AG04450 (cell line): ENCODE measurements at regions of chr16 and their contacts with region 1.

Region 1: GRCh38 chr16:67910158-67910557 is 17.1 kb downstream of the PSKH1 start:
- DNase-seq: peak; percentile 42
- H3K4me3 ChIP-seq: no peak overlapping the region
- H3K27ac ChIP-seq: no peak overlapping the region
- H3K27me3 ChIP-seq: no peaks in the 10 kb centered on the region
- CTCF ChIP-seq: no peak

Region 2: GRCh38 chr16:67723151-67723982 is 186.8 kb before region 1 on chr16:
- CTCF ChIA-PET with region 1: no interaction called
- POLR2A ChIA-PET with region 1: no interaction called
- DNase-seq: peak; percentile 18
- H3K4me3 ChIP-seq: no peak overlapping the region
- H3K27ac ChIP-seq: peak overlapping the region; percentile 21
- H3K27me3 ChIP-seq: no peaks in the 10 kb centered on the region
- CTCF ChIP-seq: no peak

Region 3: DNA sequence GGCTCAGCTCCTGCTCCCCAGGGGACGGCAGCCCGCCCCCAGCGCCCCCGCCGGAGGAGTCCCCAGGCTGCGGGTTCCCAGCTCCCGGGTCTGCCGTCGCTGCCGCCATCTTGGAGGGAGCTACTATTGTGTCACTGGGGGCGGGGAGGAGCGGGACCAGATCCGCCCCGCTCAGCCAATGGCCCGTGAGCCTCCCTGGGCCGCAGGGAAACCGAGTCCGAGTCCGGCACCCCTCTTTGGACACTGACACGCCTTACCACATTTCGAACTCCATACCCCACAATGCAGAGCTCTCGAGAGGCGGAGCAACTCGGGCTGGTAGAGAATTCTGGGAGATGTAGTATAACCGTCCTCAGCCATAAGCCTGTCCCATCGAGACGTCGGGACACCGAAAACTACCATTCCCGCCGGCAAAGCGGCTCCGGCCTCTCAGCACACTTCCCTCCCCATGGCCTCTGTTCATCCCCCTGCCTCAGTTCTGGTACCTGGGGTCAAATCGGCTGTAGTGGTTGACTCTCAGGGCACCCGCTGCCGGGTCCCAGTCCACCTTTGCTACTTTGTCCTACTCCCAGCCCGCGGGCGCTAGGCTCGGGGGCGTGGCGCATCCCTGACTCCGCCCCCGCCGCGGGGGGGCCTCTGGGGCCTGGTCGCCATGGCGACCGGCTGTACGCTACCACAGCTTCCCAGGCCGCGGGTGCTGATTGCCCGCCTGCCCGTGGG is 103.6 kb before region 1 on chr16 and contains the starts of genes RANBP10 and TSNAXIP1:
- CTCF ChIA-PET with region 1: no interaction called
- POLR2A ChIA-PET with region 1: no interaction called
- DNase-seq: peak; percentile 97
- H3K4me3 ChIP-seq: peak within 1 kb of the TSS; percentile 95
- H3K27ac ChIP-seq: no peak within 1 kb of the TSS
- H3K27me3 ChIP-seq: no peaks in the 10 kb centered on the region
- CTCF ChIP-seq: no peak
- polyA plus RNA-seq, gene RANBP10: 11.3 and 11.7 TPM in 2 replicates
- polyA plus RNA-seq, gene TSNAXIP1: 0.92 and 1.1 TPM in 2 replicates

Region 4: GRCh38 chr16:67936880-67937605 is 26.9 kb after region 1 on chr16:
- CTCF ChIA-PET with region 1: interaction called, 3 read pairs
- POLR2A ChIA-PET with region 1: interaction called, 10 read pairs
- DNase-seq: no peak
- H3K4me3 ChIP-seq: peak overlapping the region; percentile 97
- H3K27ac ChIP-seq: peak overlapping the region; percentile 93
- H3K27me3 ChIP-seq: no peaks in the 10 kb centered on the region
- CTCF ChIP-seq: no peak

Region 5: DNA sequence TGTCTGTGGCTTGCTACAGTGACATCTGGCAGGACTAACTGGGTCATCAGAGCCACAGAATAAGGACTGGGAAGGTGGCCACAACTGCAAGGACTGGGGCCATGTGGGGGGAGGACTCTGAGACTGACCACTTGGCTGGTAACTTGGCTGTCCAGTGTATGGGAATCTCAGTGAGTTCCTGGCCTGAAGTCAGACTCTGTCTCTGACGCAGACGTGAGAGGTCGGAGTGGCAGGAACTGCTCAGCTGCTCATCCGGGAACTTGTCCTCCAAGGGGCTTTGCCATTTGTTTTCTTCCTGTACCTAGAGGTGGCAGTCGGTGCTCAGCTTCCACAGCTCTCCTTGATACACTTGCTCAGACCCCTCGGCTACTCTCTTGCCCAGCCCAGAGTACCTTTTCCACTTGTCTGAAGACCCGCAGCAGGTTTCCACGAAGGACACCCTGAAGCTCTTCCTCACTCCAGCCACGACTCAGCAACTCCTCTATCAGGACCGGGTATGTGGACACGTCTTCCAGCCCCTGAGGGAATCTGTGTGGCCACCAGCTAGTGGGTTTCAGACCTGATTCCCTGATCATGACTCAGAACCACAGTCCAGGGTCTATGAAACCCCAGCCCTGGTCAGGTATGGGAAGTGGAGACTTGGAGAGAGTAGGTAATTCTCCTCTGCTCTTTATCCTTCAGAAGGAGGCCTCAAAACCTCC is 77.5 kb after region 1 on chr16:
- CTCF ChIA-PET with region 1: no interaction called
- POLR2A ChIA-PET with region 1: no interaction called
- DNase-seq: no peak
- H3K4me3 ChIP-seq: no peak overlapping the region
- H3K27ac ChIP-seq: no peak overlapping the region
- H3K27me3 ChIP-seq: no peaks in the 10 kb centered on the region
- CTCF ChIP-seq: no peak